HEK293 (cell line): ENCODE measurements at regions of chr3 and their contacts with region 1.

Region 1: GRCh38 chr3:149291178-149291577 is 42.3 kb downstream of the TM4SF18 start:
- H3K4me3 ChIP-seq: no peak overlapping the region
- H3K27ac ChIP-seq: no peak overlapping the region
- H3K4me1 ChIP-seq: no peaks in the 10 kb centered on the region
- CTCF ChIP-seq: no peak

Region 2: DNA sequence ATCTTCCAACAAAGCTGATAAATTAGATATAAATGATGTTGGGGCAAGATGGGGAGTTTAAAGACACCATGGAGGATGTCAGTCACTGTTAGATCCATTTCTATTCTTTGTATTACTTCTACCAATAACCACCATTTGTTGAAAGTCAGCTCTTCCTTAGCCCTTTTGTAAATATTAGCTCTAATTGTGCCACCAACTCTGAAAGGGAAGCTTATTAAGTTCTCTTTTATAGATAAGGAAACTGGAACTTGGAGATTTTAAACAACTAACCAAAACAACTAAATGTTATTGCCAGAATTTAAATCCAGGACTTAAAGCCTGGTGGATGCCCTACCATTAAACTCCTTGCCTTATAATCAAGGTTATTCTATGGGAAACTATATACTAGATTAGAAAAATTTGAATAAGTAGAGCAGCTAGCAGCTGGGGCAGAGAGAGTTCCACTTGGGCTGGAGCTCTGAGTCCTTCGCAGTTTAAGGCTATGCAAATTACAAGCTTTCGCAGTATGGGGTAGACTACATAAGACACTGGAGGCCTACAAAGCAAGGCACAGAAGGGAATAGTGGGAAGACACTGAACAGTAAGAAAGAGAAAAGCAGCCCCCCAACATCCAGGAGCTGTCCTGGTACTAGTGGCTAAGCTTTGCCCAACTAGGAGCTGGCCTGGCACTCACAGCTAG is 10.4 kb before region 1 on chr3:
- CTCF ChIA-PET with region 1: interaction called, 13 read pairs
- POLR2A ChIA-PET with region 1: no interaction called
- H3K4me3 ChIP-seq: no peak overlapping the region
- H3K27ac ChIP-seq: no peak overlapping the region
- H3K4me1 ChIP-seq: no peaks in the 10 kb centered on the region
- CTCF ChIP-seq: no peak